A673 (cell line): ENCODE measurements at regions of chr18 and their contacts with region 1.

Region 1: DNA sequence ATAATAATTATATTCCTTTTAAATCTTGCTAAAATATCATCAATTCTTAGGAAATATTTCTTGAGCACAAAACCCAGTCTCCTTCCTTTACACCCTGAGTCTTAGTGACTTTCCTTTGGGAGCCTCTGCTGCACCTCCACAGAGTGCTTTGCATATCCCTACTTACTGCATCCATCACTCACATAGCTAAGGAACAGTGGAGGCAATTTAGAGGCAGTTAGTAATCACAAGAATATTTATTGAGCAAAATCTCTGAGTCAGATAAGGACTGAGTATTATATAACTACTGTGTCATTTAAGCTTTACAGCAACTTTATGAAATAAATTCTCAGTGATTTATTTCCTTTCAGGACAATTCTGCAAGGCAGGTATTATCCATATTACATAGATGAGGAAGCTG is 327.7 kb downstream of the TMX3 start:
- DNase-seq: no peak
- H3K4me3 ChIP-seq: no peak overlapping the region
- H3K27ac ChIP-seq: no peak overlapping the region
- H3K4me1 ChIP-seq: peaks cover 4% of the 10 kb centered on the region
- H3K27me3 ChIP-seq: no peaks in the 10 kb centered on the region
- CTCF ChIP-seq: no peak

Region 2: DNA sequence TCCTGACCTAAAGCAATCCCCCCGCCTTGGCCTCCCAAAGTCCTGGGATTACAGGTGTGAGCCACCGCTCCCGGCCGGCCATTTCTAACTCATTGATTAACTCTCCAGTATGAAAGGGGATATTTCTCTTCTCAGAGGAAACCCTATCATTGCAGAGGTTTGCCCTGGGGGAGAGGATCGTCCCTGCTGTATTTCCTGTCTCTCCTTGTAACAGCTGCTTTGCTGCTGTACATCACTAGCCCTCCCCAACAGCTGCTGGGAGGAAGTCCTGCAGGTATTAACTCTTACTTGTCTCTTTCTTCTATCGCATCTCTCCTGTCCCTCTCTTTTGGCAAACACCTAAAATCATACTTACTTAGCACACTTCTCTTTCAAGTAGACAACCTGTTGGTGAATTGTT is 651.7 kb before region 1 on chr18:
- CTCF ChIA-PET with region 1: no interaction called
- POLR2A ChIA-PET with region 1: no interaction called
- intact Hi-C with region 1: no loop called
- DNase-seq: no peak
- H3K4me3 ChIP-seq: no peak overlapping the region
- H3K27ac ChIP-seq: no peak overlapping the region
- H3K4me1 ChIP-seq: no peaks in the 10 kb centered on the region
- H3K27me3 ChIP-seq: no peaks in the 10 kb centered on the region
- CTCF ChIP-seq: no peak

Region 3: DNA sequence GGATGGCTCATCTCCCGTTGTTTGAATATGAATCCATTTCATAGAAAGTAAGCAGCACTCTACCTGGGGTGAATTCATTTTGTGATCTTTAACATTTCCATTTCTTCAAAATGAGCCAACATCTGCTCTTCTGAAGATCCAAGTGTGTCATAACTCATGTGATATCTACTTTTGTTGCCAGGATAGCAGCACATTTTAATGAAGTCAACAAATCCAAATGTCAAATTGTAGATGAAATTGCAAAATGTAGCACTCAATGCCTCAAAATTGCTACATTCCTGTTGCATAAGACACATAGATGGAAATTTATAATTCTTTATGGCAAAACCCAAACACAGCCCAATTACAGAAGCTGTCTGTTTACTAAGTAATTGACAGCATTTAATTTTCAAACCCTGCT is 33.1 kb before region 1 on chr18:
- CTCF ChIA-PET with region 1: no interaction called
- POLR2A ChIA-PET with region 1: no interaction called
- intact Hi-C with region 1: no loop called
- DNase-seq: no peak
- H3K4me3 ChIP-seq: no peak overlapping the region
- H3K27ac ChIP-seq: no peak overlapping the region
- H3K4me1 ChIP-seq: no peaks in the 10 kb centered on the region
- H3K27me3 ChIP-seq: no peaks in the 10 kb centered on the region
- CTCF ChIP-seq: no peak

Region 4: DNA sequence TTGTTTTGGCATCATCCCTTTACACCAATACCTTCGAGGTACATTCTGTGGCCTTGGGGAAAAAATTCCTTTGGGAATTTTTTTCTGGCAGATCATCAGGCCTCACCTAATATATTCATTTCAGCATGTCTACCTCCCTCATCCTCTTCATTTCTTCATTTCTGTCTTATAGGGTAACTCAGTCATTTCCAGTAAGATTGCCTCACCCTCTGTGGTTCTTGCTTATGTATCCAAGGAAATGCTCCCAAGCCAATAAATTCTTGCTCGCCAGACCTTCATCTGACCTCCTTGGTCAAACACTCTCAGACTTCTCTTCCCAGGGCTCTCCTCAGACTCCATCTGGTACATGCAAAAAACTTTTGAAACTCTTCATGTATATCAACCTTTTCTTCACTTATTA is 62.0 kb after region 1 on chr18:
- CTCF ChIA-PET with region 1: no interaction called
- POLR2A ChIA-PET with region 1: no interaction called
- intact Hi-C with region 1: no loop called
- DNase-seq: no peak
- H3K4me3 ChIP-seq: no peak overlapping the region
- H3K27ac ChIP-seq: no peak overlapping the region
- H3K4me1 ChIP-seq: peaks cover 12% of the 10 kb centered on the region
- H3K27me3 ChIP-seq: no peaks in the 10 kb centered on the region
- CTCF ChIP-seq: no peak

Region 5: DNA sequence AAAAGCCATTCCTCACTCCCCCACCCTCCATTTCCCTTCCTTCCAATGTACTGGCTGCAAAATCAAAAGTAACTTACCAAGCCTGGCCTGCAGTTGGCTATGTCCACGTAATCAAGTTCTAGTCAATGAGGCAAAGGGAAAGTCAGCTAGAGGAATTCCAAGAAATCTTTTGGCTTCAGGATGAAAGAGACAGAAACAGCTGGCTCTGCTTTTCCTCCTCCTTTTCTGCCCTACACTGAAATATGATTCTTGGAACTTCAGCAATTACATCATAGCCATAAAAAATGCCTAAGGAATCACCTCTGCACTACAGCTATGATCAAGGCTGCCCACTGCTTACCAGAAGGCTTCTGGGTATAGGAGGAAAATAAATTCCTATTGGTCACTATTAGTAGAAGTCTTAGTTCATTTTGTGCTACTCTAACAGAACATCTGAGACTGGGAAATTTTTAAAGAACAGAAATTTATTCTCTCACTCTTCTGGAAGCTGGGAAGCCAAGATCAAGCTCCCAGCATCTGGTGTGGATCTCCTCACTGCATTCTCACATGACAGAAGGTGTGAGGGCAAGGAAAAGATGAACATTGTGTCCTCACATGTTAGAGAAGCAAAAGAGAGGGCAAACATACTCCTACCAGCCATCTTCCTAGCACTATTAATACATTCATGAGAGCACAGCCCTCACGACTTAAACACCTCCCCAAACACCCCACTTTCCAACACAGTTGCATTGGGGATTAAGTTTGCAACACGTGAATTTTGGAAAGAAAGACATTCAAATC is 107.7 kb after region 1 on chr18:
- CTCF ChIA-PET with region 1: no interaction called
- POLR2A ChIA-PET with region 1: interaction called, 15 read pairs
- intact Hi-C with region 1: no loop called
- DNase-seq: peak; percentile 48
- H3K4me3 ChIP-seq: peak overlapping the region; percentile 35
- H3K27ac ChIP-seq: peak overlapping the region; percentile 76
- H3K4me1 ChIP-seq: peaks cover 31% of the 10 kb centered on the region
- H3K27me3 ChIP-seq: no peaks in the 10 kb centered on the region
- CTCF ChIP-seq: no peak